Posterior cingulate gyrus (tissue), 11 donors: ENCODE measurements at regions of chr9 and their contacts with region 1.

Region 1: DNA sequence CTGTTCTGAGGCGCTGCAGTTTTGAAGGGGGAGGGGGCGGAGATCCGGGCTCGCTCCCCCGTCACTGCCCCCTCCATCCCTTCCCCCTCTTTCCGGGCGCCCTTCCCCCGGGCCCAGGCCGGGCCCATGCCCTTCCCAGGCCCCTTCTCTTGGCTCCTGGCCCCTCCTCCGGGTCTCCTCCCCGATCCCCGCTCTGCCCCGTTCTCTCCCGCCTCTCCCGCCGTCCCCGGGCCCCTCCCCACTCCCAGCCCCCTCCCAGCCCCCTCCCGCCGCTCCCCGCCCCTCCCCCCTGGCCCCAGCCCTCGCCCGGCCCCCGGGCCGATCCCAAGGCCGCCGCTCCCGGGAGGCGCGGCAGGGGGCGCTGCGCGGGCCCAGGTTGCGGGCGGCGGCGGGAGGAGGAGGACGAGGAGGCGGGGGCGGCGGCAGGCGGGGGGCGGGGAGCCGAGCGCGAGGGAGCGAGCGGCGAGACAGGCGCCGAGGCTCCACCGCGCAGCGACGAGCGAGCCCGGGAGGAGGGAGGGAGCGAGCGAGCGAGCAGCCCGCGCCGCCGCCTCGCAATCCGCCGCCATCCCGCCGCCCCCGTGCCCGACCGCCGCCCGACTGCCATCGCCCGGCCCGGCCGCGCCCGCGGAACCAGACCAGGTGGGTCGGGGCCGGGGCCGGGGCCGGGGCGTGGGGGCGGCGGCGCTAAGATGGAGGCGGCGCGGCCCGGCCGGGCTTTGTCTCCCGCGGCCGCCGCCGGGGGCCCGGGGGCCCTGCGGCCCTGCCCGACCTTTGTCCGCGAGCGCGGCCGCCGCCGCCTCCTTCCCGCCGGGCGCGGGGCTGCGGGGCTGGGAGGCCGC is at the start of gene PRRC2B:
- DNase-seq: peak; percentile 68 to 96 (median 76)

Region 2: DNA sequence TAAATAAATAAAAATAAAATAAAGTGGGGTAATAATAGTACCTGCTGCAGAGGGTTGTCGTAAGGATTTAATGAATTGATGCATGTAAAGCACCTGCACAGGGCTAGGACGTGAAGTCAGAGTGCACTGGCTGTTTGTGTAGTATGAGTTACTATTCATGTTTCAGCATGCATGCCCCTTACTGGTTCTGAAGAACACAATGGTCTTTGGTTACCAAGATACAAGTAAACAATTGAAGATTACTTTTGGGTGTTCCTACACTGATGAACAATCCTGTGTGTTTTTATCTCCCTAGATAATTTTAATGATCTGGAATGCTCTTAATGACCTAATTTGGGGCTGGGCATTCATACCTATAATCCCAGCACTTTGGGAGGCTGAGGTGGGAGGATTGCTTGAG is 23.2 kb before region 1 on chr9:
- intact Hi-C with region 1: loop called (anchors 1 kb)
- DNase-seq: no peak

Region 3: DNA sequence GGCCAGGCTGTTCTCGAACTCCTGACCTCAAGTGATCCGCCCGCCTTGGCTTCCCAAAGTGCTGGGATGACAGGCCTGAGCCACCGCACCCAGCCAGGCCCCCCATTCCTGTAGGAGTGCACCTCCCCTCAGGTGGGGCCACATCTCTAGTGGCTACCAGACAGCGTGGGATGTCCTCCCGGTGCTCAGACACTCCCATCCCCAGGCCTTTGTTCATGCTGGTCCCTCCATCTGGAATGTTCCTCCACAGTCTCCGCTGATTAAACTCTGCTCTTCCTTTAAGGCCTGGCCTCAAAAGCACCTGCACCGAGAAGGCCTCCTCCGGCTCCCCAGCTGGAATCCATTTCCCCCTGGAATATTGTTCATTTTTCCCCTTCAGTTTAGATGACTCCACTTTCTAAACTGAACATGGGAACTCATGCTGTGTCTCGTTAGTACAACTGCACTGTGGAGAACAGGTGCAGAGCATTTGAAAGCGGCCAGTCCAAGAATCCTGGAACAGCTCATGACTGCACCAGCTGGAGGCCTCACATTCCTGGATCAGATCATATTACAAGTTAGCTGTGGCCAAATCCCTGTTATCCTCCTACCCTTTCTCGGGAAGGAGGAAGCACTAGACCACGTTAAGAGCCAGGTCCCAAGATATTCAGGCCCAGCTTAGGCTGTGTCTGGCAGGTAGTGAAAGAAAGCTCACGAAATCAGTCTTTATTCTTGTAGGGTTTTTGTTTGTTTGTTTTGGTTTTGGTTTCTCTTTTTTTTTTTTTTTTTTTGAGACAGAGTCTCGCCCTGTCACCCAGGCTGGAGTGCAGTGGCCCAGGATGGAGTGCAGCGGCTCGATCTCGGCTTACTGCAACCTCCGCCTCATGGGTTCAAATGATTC is 10.8 kb before region 1 on chr9:
- intact Hi-C with region 1: loop called (anchors 1 kb)
- DNase-seq: peak in 6 of 10 donors; percentile 34 to 91 (median 56)